CD8-positive, alpha-beta memory T cell (primary cell): ENCODE measurements at regions of chr20 and their contacts with region 1.

Region 1: DNA sequence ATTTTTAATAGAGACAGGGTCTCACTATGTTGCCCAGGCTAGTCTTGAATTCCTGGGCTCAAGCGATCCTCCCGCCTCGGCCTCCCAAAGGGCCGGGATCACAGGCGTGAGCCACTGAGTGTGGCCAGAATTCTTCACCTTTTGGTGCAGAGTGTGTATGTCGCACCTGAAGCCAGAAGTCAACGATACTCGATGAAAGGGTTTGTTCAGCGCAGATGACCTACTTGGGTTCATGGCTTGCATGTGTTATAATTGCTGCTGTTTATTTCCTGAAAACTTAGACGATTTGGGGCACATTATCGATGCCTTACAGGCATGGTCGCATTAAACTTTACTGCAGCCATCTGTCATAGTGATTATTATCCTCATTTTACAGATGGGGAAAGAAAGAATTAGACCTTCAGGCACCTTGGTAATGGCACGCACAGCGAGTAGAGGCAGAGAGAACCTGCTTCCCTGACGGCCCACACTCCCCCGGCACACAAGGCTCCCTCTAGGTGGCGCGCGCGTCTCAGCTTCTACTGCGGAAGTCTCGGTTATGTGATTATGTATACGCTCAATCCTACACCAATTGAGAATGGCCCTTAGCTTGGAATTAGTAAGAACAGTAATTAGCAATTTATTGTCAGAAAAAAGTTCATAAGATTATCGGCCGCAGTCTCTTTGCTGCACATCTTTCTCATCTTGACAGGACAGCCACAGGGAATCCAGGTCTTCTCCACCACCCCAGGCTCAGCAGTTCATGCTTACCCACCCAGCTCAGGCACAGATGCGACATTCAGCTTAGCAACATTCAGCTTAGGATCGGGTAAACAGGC is 212.8 kb upstream of the PROKR2 start:
- DNase-seq: peak; percentile 67 to 86 (median 75)
- H3K4me3 ChIP-seq: peak overlapping the region; percentile 35
- H3K4me3 Mint-ChIP-seq: peak overlapping the region; percentile 38 to 85 (median 71)
- H3K27ac ChIP-seq: no peak overlapping the region
- H3K27ac Mint-ChIP-seq: peak overlapping the region; percentile 37 to 90 (median 80)
- H3K4me1 ChIP-seq: peaks cover 13% of the 10 kb centered on the region
- H3K4me1 Mint-ChIP-seq: peaks cover 17 to 28% (median 23%) of the 10 kb centered on the region in 3 donors
- H3K27me3 ChIP-seq: no peaks in the 10 kb centered on the region
- H3K27me3 Mint-ChIP-seq: no peaks in the 10 kb centered on the region

Region 2: DNA sequence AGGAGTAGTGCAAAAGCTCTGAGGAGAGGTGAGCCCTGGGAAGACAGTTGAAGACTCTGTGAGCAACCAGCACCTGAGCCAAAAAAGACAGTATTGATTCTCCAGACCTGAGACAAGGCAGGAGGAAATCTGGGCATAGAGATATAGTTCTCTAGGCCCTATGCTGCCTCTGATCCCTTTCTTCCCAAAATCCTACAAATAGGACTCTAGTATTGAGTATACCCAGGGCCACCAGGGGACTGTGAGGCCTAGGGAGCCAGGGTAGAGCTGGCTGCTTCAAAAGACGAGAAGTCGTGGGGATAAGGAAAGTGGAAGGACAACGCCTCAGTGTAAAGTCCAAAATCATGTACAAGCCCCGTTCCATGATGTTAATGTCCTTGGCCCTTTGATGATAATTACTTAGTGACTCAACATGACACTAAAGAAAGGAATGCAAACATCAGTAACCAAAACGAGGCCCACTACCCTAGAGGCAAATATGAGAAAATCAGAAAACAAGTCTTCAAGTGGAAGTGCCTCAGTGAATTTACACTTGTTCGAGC is 15.5 kb before region 1 on chr20:
- CTCF ChIA-PET with region 1: interaction called, 11 read pairs
- POLR2A ChIA-PET with region 1: no interaction called
- DNase-seq: no peak
- H3K4me3 ChIP-seq: no peak overlapping the region
- H3K4me3 Mint-ChIP-seq: no peak overlapping the region
- H3K27ac ChIP-seq: no peak overlapping the region
- H3K27ac Mint-ChIP-seq: no peak overlapping the region
- H3K4me1 ChIP-seq: no peaks in the 10 kb centered on the region
- H3K4me1 Mint-ChIP-seq: peaks cover 0 to 7% (median 3%) of the 10 kb centered on the region in 3 donors
- H3K27me3 ChIP-seq: no peaks in the 10 kb centered on the region
- H3K27me3 Mint-ChIP-seq: no peaks in the 10 kb centered on the region

Region 3: GRCh38 chr20:5543385-5543784 is 13.8 kb after region 1 on chr20:
- CTCF ChIA-PET with region 1: interaction called, 13 read pairs
- POLR2A ChIA-PET with region 1: no interaction called
- DNase-seq: no peak
- H3K4me3 ChIP-seq: no peak overlapping the region
- H3K4me3 Mint-ChIP-seq: no peak overlapping the region
- H3K27ac ChIP-seq: no peak overlapping the region
- H3K27ac Mint-ChIP-seq: peak overlapping the region in 1 of 8 donors; percentile 88
- H3K4me1 ChIP-seq: no peaks in the 10 kb centered on the region
- H3K4me1 Mint-ChIP-seq: peaks cover 0 to 12% (median 3%) of the 10 kb centered on the region in 3 donors
- H3K27me3 ChIP-seq: no peaks in the 10 kb centered on the region
- H3K27me3 Mint-ChIP-seq: peaks cover 0 to 1% of the 10 kb centered on the region in 2 donors

Region 4: GRCh38 chr20:5569021-5569420 is 39.5 kb after region 1 on chr20:
- CTCF ChIA-PET with region 1: interaction called, 13 read pairs
- POLR2A ChIA-PET with region 1: no interaction called
- DNase-seq: peak; percentile 4 to 57 (median 34)
- H3K4me3 ChIP-seq: no peak overlapping the region
- H3K4me3 Mint-ChIP-seq: no peak overlapping the region
- H3K27ac ChIP-seq: no peak overlapping the region
- H3K27ac Mint-ChIP-seq: peak overlapping the region in 5 of 8 donors; percentile 14 to 71 (median 54)
- H3K4me1 ChIP-seq: peaks cover 11% of the 10 kb centered on the region
- H3K4me1 Mint-ChIP-seq: peaks cover 7 to 26% (median 21%) of the 10 kb centered on the region in 3 donors
- H3K27me3 ChIP-seq: no peaks in the 10 kb centered on the region
- H3K27me3 Mint-ChIP-seq: no peaks in the 10 kb centered on the region

Region 5: GRCh38 chr20:5788385-5788895 is 258.9 kb after region 1 on chr20:
- CTCF ChIA-PET with region 1: interaction called, 63 read pairs
- POLR2A ChIA-PET with region 1: interaction called, 3 read pairs
- DNase-seq: peak; percentile 57 to 84 (median 74)
- H3K4me3 ChIP-seq: no peak overlapping the region
- H3K4me3 Mint-ChIP-seq: no peak overlapping the region
- H3K27ac ChIP-seq: no peak overlapping the region
- H3K27ac Mint-ChIP-seq: peak overlapping the region in 4 of 8 donors; percentile 39 to 87 (median 45)
- H3K4me1 ChIP-seq: no peaks in the 10 kb centered on the region
- H3K4me1 Mint-ChIP-seq: peaks cover 2 to 18% (median 14%) of the 10 kb centered on the region in 3 donors
- H3K27me3 ChIP-seq: no peaks in the 10 kb centered on the region
- H3K27me3 Mint-ChIP-seq: no peaks in the 10 kb centered on the region

Region 6: GRCh38 chr20:6000871-6001270 is 471.3 kb after region 1 on chr20:
- CTCF ChIA-PET with region 1: interaction called, 15 read pairs
- POLR2A ChIA-PET with region 1: no interaction called
- DNase-seq: no peak
- H3K4me3 ChIP-seq: no peak overlapping the region
- H3K4me3 Mint-ChIP-seq: no peak overlapping the region
- H3K27ac ChIP-seq: no peak overlapping the region
- H3K27ac Mint-ChIP-seq: no peak overlapping the region
- H3K4me1 ChIP-seq: peaks cover 26% of the 10 kb centered on the region
- H3K4me1 Mint-ChIP-seq: peaks cover 31 to 46% (median 45%) of the 10 kb centered on the region in 3 donors
- H3K27me3 ChIP-seq: no peaks in the 10 kb centered on the region
- H3K27me3 Mint-ChIP-seq: peaks cover 0 to 1% of the 10 kb centered on the region in 2 donors

Region 7: DNA sequence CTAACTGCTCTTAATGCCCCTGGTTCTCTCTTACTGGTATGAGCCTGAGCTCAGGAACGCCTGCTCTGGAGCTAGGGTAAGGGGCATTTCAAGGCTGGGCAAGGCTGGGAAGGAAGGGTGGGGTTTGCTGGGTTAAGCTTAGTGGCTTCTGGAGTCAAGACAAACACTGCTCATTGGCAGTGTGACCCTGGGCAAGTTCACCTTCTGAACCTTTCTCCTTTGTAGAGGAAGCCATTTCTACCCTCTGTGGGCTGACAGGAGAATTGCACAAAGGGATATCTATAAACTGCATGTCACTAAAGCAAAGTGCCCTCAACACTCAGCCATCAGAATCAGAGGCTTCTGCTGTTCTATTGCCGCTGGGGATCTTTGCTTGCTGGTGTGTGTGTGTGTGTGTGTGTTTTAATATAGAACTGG is 544.6 kb after region 1 on chr20:
- CTCF ChIA-PET with region 1: interaction called, 37 read pairs
- POLR2A ChIA-PET with region 1: no interaction called
- DNase-seq: no peak
- H3K4me3 ChIP-seq: no peak overlapping the region
- H3K4me3 Mint-ChIP-seq: no peak overlapping the region
- H3K27ac ChIP-seq: no peak overlapping the region
- H3K27ac Mint-ChIP-seq: peak overlapping the region in 1 of 8 donors; percentile 83
- H3K4me1 ChIP-seq: no peaks in the 10 kb centered on the region
- H3K4me1 Mint-ChIP-seq: no peaks in the 10 kb centered on the region
- H3K27me3 ChIP-seq: no peaks in the 10 kb centered on the region
- H3K27me3 Mint-ChIP-seq: peaks cover 4 to 8% of the 10 kb centered on the region in 2 donors